ENCODE measurements at regions of chr17 and their contacts with region 1.

Region 1: DNA sequence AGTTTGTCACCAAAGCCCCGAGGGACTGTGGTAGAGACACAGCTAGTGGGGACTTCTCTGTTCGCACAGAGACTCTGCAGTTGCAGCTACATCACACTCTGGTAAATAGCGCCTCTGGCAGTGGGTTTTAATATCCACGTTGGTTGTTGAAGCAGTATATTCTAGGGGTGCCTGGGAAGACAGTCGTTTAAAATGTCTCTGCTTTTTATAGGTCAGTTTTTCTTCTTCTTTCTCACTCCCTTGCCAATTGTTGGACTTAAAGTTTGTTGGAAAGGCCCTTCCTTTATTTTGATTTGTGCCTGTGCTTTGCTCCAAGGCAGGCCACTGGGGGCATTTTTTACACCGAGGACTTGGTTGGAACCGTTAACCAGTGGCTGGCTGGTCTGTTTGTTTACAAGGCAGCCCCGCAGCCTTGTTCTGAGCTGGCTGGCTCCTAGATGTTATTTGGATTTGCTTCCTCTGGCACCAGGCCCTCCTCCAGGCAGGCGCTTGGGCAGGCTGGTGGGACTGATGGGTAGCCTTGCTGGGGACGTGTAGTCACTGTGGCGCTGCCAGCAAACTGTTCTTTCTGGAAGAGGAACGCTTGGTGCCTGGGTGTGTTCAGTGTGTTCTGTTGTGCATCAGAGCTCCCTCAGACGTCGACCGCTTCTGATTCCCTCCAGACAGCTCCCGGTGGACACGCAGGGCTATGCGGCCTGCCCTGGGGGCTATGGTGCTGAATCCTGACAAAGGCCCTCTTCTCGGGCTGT is 218.2 kb upstream of the CHMP6 start:
- DNase-seq: peak; percentile 35
- H3K4me3 ChIP-seq: no peak overlapping the region
- H3K27ac ChIP-seq: peak overlapping the region; percentile 18 to 21
- H3K4me1 ChIP-seq: no peaks in the 10 kb centered on the region
- H3K27me3 ChIP-seq: no peaks in the 10 kb centered on the region
- CTCF ChIP-seq: no peak
- POLR2A ChIP-seq: no peak

Region 2: GRCh38 chr17:80751070-80751945 is 22.1 kb before region 1 on chr17:
- intact Hi-C with region 1: loop called (anchors 1 kb)
- DNase-seq: no peak
- H3K4me3 ChIP-seq: no peak overlapping the region
- H3K27ac ChIP-seq: peak overlapping the region; percentile 57 to 72
- H3K4me1 ChIP-seq: no peaks in the 10 kb centered on the region
- H3K27me3 ChIP-seq: no peaks in the 10 kb centered on the region
- CTCF ChIP-seq: no peak
- POLR2A ChIP-seq: no peak